Left ventricle myocardium superior (tissue), 1 donor: ENCODE measurements at regions of chr15 and their contacts with region 1.

Region 1: DNA sequence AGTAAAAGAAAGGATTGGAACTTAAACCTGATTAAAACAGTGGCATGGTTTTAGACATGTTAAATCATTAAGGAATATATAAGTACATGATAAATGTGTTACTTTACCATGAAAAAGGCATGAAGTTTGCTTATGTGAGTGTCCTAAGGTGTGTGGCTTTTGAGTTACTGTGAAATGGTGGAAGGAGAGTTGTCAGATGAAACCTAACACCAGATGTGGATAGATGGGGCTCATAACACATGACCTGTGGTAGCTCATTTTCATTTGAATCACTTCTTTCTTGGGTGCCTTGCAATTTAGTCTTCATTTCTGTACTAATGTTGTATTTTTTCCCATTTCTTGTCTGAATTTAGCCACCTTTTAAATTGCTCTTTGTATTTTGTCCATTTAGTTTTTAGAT is 13.0 kb downstream of the MEF2A start:
- DNase-seq: no peak
- ATAC-seq: peak; percentile 35

Region 2: GRCh38 chr15:99476413-99477222 is 102.2 kb before region 1 on chr15:
- intact Hi-C with region 1: loop called (anchors 10 kb)
- DNase-seq: peak; percentile 64
- ATAC-seq: peak; percentile 24

Region 3: DNA sequence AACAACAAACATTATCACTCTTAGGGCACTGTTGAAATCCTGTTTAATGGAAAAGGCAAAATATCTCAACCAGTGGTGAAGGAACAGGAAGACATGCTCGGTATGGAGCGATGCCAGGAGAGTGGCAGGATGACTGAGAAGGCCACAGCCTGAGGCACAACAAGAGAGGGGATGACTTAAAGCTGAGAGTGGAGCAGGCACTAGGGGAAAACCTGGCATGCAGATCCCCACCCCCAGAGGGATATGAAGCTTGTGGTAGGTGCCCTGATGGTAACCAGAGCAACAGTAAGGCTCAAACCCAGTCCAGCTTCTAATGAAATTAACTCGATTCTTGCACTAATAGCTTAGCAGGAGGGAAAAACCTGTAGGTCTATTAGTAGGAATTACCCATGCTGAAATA is 114.0 kb after region 1 on chr15:
- intact Hi-C with region 1: loop called (anchors 10 kb)
- DNase-seq: no peak
- ATAC-seq: peak; percentile 36